ENCODE measurements at regions of chr6 and their contacts with region 1.

Region 1: DNA sequence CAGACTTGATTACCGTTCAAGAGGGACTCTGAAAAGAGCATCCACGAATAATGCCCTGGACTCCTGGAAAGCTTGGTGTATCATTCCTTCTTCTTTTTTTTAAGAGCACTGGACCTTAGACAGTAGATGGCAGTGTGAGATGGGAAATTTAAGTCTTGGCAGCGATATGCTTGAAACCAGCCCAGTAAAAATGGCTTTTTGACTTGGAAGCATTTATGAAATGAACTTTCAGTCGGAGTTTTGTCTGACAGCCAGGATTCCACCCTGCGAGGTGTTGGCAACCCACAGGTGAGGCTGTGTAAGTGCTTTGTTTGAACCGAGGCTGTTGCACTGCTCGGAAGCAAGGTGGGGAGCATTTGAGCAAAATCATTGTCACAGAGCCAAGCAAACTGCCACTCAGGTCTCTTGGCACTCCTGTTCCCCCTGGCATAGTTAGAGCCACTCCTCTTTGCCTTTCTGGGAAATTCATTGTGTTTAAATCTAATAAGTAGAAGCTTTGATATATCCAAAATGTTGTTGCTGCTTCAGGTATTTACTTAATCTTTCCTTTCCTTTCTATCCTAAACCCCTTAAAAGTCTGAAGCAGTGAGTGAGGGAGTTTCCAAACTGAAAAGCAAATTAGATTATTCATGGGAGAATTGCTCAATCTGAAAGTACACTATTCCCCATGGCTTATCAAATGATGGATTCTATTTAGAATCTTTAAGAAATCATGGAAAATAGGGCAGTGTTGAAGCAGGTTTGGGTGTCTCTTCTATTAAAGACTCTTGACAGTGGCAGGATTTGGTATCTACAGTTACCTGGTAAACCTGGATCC is 272.8 kb upstream of the SLC35B3 start:
- DNase-seq: peak; percentile 19
- H3K4me3 ChIP-seq: peak overlapping the region in 1 of 3 experiments; percentile 13
- H3K27ac ChIP-seq: no peak overlapping the region
- H3K4me1 ChIP-seq: no peaks in the 10 kb centered on the region
- H3K27me3 ChIP-seq: no peaks in the 10 kb centered on the region
- CTCF ChIP-seq: peak; percentile 17 to 48

Region 2: GRCh38 chr6:8499540-8499939 is 208.6 kb before region 1 on chr6:
- CTCF ChIA-PET with region 1: no interaction called
- dilution Hi-C with region 1: no loop called
- in situ Hi-C with region 1: no loop called
- intact Hi-C with region 1: loop called (anchors 5 kb)
- DNase-seq: peak; percentile 5
- H3K4me3 ChIP-seq: no peak overlapping the region
- H3K27ac ChIP-seq: no peak overlapping the region
- H3K4me1 ChIP-seq: no peaks in the 10 kb centered on the region
- H3K27me3 ChIP-seq: no peaks in the 10 kb centered on the region
- CTCF ChIP-seq: peak; percentile 46 to 66

Region 3: GRCh38 chr6:8539446-8539845 is 168.7 kb before region 1 on chr6:
- CTCF ChIA-PET with region 1: no interaction called
- dilution Hi-C with region 1: no loop called
- in situ Hi-C with region 1: no loop called
- intact Hi-C with region 1: loop called (anchors 5 kb)
- DNase-seq: peak; percentile 33
- H3K4me3 ChIP-seq: no peak overlapping the region
- H3K27ac ChIP-seq: no peak overlapping the region
- H3K4me1 ChIP-seq: no peaks in the 10 kb centered on the region
- H3K27me3 ChIP-seq: no peaks in the 10 kb centered on the region
- CTCF ChIP-seq: peak; percentile 24 to 51

Region 4: DNA sequence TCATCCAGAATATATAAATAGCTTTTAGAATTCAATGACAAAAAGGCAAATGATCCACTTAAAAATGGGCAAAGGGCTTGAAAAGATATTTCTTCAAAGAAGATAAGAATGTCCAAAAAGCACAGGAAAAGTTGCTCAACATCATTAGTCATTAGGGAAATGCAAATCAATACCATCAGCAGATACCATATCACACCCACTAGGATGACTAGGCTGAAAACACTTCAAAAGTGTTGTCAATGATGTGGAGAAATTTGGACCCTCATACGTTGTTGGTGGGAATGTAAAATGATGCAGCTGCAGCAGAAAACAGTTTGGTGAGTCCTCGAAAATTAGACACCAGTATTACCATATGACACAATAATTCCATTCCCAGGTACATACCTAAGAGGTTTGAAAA is 30.8 kb after region 1 on chr6:
- CTCF ChIA-PET with region 1: no interaction called
- dilution Hi-C with region 1: no loop called
- in situ Hi-C with region 1: no loop called
- intact Hi-C with region 1: no loop called
- DNase-seq: no peak
- H3K4me3 ChIP-seq: no peak overlapping the region
- H3K27ac ChIP-seq: no peak overlapping the region
- H3K4me1 ChIP-seq: no peaks in the 10 kb centered on the region
- H3K27me3 ChIP-seq: no peaks in the 10 kb centered on the region
- CTCF ChIP-seq: no peak

Region 5: DNA sequence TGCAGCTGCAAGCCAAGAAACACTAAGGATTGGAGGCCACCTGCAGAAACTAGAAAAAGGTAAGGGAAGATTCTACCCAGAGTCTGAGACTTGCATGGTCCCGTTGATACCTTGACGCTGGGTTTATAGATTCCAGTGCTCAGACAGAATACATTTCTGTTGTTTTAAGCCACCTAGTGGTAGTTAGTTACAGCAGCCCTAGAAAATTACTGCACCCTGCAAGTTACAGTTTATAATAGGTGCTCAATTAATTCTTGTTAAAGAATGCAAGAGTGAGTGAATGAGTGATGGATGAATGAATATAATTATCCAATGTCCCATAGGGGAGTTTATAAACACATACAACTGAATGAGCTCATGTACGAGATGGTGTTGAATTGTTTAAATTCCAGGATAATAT is 180.3 kb after region 1 on chr6:
- CTCF ChIA-PET with region 1: no interaction called
- dilution Hi-C with region 1: no loop called
- in situ Hi-C with region 1: no loop called
- intact Hi-C with region 1: loop called (anchors 1 kb)
- DNase-seq: no peak
- H3K4me3 ChIP-seq: no peak overlapping the region
- H3K27ac ChIP-seq: no peak overlapping the region
- H3K4me1 ChIP-seq: no peaks in the 10 kb centered on the region
- H3K27me3 ChIP-seq: peaks cover 3% of the 10 kb centered on the region
- CTCF ChIP-seq: peak; percentile 41 to 42

Region 6: GRCh38 chr6:8930009-8930408 is 221.8 kb after region 1 on chr6:
- CTCF ChIA-PET with region 1: no interaction called
- dilution Hi-C with region 1: no loop called
- in situ Hi-C with region 1: no loop called
- intact Hi-C with region 1: no loop called
- DNase-seq: no peak
- H3K4me3 ChIP-seq: no peak overlapping the region
- H3K27ac ChIP-seq: no peak overlapping the region
- H3K4me1 ChIP-seq: no peaks in the 10 kb centered on the region
- H3K27me3 ChIP-seq: no peaks in the 10 kb centered on the region
- CTCF ChIP-seq: no peak

Measured in mammary epithelial cell (primary cell).